ENCODE measurements at regions of chr5 and their contacts with region 1.

Region 1: GRCh38 chr5:142324871-142325724 is at the start of gene SPRY4:
- DNase-seq: peak in 1 of 2 donors; percentile 95
- H3K4me3 ChIP-seq: peak within 1 kb of the TSS; percentile 57
- H3K27ac ChIP-seq: peak within 1 kb of the TSS; percentile 66
- H3K4me1 ChIP-seq: peaks cover 62% of the 10 kb centered on the region
- H3K27me3 ChIP-seq: no peaks in the 10 kb centered on the region
- CTCF ChIP-seq: peak in 2 of 3 experiments; percentile 3 to 10
- POLR2A ChIP-seq: peak in 1 of 2 donors; percentile 68
- total RNA-seq, gene SPRY4: 13.5 TPM

Region 2: DNA sequence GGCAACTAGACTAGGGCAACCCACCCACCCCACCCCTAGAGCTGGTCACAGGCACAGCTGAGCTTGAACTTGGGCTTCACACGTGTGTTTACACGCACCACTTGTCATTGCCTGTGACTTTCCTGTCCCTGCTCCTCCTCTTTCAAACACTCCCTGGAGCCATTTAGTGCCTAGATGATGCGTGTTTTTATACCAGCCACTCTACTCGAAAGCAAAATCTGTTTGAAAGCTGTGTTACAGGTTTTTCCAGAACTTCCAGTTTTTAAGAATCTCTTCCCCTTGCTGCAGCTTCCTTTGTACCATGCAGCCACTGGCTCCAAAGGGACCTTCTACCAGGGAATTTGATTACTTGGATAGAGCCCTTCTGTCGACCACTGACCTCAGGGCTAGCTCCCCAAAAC is 78.5 kb after region 1 on chr5:
- intact Hi-C with region 1: no loop called
- DNase-seq: no peak
- H3K4me3 ChIP-seq: no peak overlapping the region
- H3K27ac ChIP-seq: no peak overlapping the region
- H3K4me1 ChIP-seq: no peaks in the 10 kb centered on the region
- H3K27me3 ChIP-seq: no peaks in the 10 kb centered on the region
- CTCF ChIP-seq: no peak
- POLR2A ChIP-seq: no peak

Region 3: GRCh38 chr5:142655339-142656267 is 330.5 kb after region 1 on chr5:
- intact Hi-C with region 1: loop called (anchors 5 kb)
- DNase-seq: no peak
- H3K4me3 ChIP-seq: no peak overlapping the region
- H3K27ac ChIP-seq: no peak overlapping the region
- H3K4me1 ChIP-seq: peaks cover 5% of the 10 kb centered on the region
- H3K27me3 ChIP-seq: no peaks in the 10 kb centered on the region
- CTCF ChIP-seq: peak; percentile 76 to 96 (median 90)
- POLR2A ChIP-seq: no peak

Region 4: GRCh38 chr5:143931476-143931875 is 1606.4 kb after region 1 on chr5:
- intact Hi-C with region 1: no loop called
- DNase-seq: no peak
- H3K4me3 ChIP-seq: no peak overlapping the region
- H3K27ac ChIP-seq: no peak overlapping the region
- H3K4me1 ChIP-seq: no peaks in the 10 kb centered on the region
- H3K27me3 ChIP-seq: no peaks in the 10 kb centered on the region
- CTCF ChIP-seq: no peak
- POLR2A ChIP-seq: no peak

Measured in vagina (tissue), 2 donors.